Activated CD4-positive, alpha-beta T cell treated with anti-CD3 and anti-CD28 coated beads, Interleukin-2, amount 10 ng/mL, durations not matched to agents 24 days and 14 days (primary cell): ENCODE measurements at regions of chr1 and their contacts with region 1.

Region 1: GRCh38 chr1:33007190-33008050 is 29.3 kb downstream of the AK2 start:
- DNase-seq: peak; percentile 72
- H3K4me3 Mint-ChIP-seq: no peak overlapping the region
- H3K27ac Mint-ChIP-seq: peak overlapping the region; percentile 31
- H3K4me1 Mint-ChIP-seq: peaks cover 30% of the 10 kb centered on the region
- H3K27me3 Mint-ChIP-seq: no peaks in the 10 kb centered on the region

Region 2: GRCh38 chr1:33018112-33018511 is 10.7 kb after region 1 on chr1:
- intact Hi-C with region 1: loop called (anchors 1 kb)
- DNase-seq: no peak
- H3K4me3 Mint-ChIP-seq: peak overlapping the region; percentile 16
- H3K27ac Mint-ChIP-seq: peak overlapping the region; percentile 89
- H3K4me1 Mint-ChIP-seq: peaks cover 22% of the 10 kb centered on the region
- H3K27me3 Mint-ChIP-seq: no peaks in the 10 kb centered on the region